Right cardiac atrium (tissue), 5 donors: ENCODE measurements at regions of chr9 and their contacts with region 1.

Region 1: DNA sequence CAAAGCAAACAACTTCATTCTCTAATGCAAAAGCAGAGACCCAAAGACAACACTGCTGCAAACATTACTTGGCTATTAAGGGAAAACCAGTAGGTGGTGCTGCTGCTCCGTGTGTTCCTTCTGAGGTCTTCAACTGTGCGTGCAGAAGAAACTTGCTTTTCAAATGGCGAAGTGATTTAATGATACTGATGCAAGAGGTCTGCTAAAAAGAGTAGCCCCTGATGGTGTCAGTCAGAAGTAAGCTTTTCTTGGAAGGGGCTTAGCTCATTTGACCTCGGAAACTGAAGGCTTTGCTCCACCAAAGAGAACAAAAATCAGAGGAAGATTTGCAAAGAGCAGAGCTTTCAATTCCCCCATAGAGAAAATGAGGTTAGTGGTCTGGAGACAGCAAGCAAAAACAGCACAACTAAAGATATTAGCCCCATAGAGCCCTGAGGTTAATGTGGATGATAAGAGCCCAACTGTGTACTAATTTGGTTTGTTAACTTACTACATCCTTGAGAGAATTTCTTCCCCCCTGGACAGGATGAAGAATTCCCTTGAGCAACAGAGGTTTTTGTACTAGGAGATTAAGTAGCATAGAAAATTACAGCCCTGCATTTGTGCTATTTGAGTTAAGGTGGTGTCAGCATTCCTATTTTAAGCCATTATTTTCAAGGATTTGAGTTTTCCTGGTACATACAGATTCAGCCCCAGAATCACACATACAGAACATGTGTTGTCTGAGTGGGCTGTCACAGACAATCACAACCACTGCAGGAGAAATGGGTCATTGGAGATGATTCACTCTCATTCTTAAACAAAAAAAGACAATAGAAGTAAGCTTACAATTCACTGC is 153.2 kb upstream of the C9orf72 start:
- DNase-seq: peak; percentile 42 to 62 (median 56)
- ATAC-seq: peak; percentile 64 to 68
- H3K4me3 ChIP-seq: no peak overlapping the region
- H3K27ac ChIP-seq: no peak overlapping the region
- H3K4me1 ChIP-seq: no peaks in the 10 kb centered on the region
- H3K27me3 ChIP-seq: no peaks in the 10 kb centered on the region

Region 2: GRCh38 chr9:27573634-27574590 is 152.6 kb before region 1 on chr9:
- intact Hi-C with region 1: no loop called
- DNase-seq: peak; percentile 94 to 97 (median 95)
- ATAC-seq: peak; percentile 91 to 94
- H3K4me3 ChIP-seq: peak overlapping the region; percentile 97
- H3K27ac ChIP-seq: peak overlapping the region; percentile 96
- H3K4me1 ChIP-seq: no peaks in the 10 kb centered on the region
- H3K27me3 ChIP-seq: no peaks in the 10 kb centered on the region

Region 3: DNA sequence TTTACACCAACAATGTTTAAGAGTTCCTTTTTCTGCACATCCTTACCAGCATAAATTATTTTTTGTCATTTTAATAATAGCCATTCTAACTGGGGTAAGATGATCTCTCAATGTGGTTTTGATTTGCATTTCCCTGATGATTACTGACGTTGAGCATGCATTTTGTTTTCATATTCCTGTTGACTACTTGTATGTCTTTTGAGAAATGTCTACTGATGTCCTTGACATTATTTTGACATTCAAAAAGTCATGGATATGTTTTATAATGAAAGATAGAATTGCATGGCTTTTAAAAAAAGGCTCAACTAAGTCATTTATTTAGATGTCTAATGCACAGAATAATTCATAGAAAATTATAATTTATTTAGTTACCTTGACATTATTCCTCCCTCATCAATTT is 228.4 kb after region 1 on chr9:
- intact Hi-C with region 1: no loop called
- DNase-seq: no peak
- ATAC-seq: no peak
- H3K4me3 ChIP-seq: no peak overlapping the region
- H3K27ac ChIP-seq: no peak overlapping the region
- H3K4me1 ChIP-seq: no peaks in the 10 kb centered on the region
- H3K27me3 ChIP-seq: no peaks in the 10 kb centered on the region

Region 4: DNA sequence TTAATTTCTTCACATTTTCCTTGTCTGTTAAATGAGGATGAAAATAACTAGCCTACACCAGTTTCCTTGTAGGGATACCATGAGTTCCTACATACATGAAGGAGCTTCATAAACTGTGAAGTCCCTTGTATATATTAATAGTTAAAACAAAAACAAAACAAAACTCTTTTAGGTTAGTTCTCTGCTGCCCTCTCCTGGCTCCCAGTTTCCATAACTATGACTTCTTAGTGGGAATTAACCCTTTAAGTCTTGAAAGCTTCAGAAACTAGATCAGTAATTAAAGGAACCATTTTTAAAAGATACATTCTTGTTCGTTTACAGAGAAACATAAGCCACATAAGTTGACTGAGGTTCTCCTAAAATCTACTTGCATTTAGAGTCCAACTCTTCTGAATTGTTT is 346.8 kb after region 1 on chr9:
- intact Hi-C with region 1: loop called in 2 of 4 experiments (anchors 5 kb)
- DNase-seq: peak in 2 of 3 donors; percentile 12 to 21
- ATAC-seq: no peak
- H3K4me3 ChIP-seq: no peak overlapping the region
- H3K27ac ChIP-seq: no peak overlapping the region
- H3K4me1 ChIP-seq: no peaks in the 10 kb centered on the region
- H3K27me3 ChIP-seq: no peaks in the 10 kb centered on the region